Posterior vena cava (tissue), 2 donors: ENCODE measurements at regions of chr12 and their contacts with region 1.

Region 1: GRCh38 chr12:116174904-116175303 is 102.6 kb downstream of the MED13L start:
- DNase-seq: no peak

Region 2: GRCh38 chr12:116015525-116015924 is 159.4 kb before region 1 on chr12:
- intact Hi-C with region 1: no loop called
- DNase-seq: no peak

Region 3: GRCh38 chr12:116159175-116159574 is 15.7 kb before region 1 on chr12:
- intact Hi-C with region 1: no loop called
- DNase-seq: no peak

Region 4: DNA sequence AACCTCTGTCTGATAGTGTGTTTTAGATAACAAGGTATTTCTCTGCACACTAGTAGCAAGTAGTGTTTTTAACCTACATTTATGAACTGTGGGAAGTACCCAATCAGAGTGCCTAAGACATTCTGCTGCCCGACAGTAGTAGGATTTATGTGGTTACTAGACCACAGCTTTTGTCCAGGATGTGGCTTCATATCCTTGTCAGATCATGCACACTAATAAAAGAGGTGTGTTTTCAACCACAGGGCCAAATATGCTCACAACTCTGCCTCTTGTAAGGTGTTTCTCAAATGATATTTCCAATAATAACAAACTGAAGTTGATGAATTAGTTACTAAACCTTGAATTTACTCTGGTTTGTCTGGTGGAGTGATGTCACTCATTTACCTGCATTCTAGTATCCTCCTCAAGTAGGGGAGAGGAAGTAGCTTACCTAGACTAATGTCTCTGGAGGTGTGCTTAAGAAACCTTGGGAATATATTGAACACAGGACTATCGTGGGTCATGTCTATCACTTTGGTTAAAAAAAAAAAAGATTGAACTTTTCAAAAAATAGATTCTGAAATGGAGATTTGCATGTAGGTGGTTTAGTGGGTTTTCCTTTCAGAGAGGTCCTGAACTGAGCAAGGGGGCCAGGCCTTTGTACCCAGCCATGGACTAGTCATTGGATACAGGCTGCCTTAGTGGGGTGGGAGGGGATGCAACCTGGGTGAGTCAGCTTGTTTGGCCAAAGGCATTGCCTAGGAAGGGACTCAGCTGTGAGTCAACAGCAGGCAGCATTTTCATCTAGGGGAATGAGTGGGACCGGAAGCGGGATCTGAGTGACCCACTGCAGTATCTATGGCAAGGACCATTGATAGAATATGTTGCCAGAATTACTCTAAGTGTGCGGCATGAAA is 749.9 kb after region 1 on chr12:
- intact Hi-C with region 1: loop called in 1 of 2 experiments (anchors 5 kb)
- DNase-seq: no peak

Region 5: GRCh38 chr12:116982791-116983411 is 808.0 kb after region 1 on chr12:
- intact Hi-C with region 1: no loop called
- DNase-seq: no peak